ENCODE measurements at regions of chr2 and their contacts with region 1.

Region 1: DNA sequence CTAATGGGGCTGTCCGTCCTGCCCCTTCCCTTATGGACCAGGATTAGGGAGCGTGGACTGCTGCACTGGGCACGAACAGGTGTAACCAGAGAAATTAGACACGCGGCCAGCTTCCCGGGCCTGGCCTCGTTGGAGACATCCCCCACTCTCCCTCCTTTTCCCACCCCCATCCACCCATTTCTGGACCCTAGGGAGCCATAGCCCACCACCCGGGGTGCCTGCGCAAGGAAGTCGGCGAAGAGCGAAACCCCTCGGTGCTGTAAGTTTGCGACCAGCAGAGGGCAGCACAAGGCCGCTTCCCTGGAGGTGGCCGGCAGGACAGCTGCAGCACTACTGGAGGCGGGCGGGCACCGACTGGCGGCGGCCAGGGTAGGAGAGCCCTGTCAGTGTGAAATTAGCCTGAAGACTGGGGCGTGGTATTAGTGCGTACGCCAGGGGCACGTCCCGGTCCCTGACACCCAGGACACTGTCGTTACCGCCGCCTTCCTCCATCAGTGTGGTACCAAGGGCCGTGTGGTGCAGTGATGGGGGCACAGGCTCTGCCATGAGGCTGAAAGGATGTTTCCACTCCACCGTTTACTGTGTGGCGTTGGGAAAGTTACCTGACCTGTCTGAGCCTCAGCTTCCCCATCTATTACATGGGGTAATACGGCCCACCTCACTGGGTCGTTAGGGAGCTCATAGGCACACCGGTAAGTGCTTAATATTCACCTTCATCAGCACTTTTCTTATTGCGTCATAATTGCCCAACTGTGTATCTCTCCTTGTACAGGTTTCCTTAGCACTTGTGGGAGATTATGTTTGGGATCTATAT is 36.0 kb upstream of the CD207 start:
- DNase-seq: peak; percentile 92
- ATAC-seq: peak; percentile 96
- H3K4me3 Mint-ChIP-seq: no peak overlapping the region
- H3K27ac Mint-ChIP-seq: no peak overlapping the region
- H3K4me1 Mint-ChIP-seq: peaks cover 5% of the 10 kb centered on the region
- H3K27me3 Mint-ChIP-seq: peaks cover 41% of the 10 kb centered on the region

Region 2: GRCh38 chr2:70789304-70790135 is 82.1 kb before region 1 on chr2:
- CTCF ChIA-PET with region 1: interaction called, 16 read pairs
- POLR2A ChIA-PET with region 1: no interaction called
- intact Hi-C with region 1: loop called in 1 of 2 experiments (anchors 2 kb)
- DNase-seq: peak; percentile 88
- ATAC-seq: peak; percentile 84
- H3K4me3 Mint-ChIP-seq: peak overlapping the region; percentile 56
- H3K27ac Mint-ChIP-seq: peak overlapping the region; percentile 27
- H3K4me1 Mint-ChIP-seq: peaks cover 11% of the 10 kb centered on the region
- H3K27me3 Mint-ChIP-seq: peaks cover 50% of the 10 kb centered on the region

Region 3: DNA sequence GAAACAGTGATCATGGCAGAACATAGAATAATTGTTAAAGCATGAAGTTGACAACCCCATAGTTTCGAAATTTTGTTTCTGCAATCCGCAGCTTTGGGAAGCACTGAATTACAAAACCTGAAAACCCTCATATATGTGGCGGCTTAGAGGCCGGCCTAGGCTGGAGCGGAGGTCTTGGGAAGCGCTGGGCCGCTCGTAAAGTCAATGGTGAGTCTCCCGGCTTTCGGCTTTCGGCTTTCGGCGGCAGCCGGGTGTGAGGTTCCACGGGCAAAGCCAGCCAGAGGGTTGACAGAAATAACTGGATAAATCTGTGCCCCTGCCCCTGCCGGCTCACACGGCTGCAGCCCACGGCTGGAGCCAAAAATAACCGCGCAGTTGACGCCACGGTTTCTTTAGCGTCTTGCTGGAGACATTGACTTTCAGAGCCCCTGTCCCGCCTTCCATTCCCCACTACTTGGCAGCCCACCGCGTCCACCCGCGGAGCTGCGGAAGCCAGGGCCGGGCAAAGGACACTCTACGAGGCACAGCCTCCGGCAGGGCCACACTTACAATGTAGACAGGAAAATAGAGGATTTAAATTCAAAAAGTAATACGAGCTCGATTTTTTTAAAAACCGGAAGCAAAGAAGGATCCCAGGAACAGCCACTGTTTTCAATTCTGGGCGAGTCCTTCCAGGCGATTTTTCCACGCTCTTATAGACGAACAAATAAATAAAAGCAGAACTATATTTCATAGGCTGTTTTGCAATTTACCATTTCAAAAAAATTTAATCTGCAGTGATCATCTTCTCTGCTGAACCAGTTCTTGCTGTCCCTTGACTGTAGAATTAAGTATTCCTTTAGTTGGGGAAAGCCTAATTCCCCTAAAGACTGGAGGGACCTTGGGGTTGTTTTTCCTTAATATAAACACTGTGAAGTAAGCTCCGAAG is 35.8 kb after region 1 on chr2:
- CTCF ChIA-PET with region 1: interaction called, 16 read pairs
- POLR2A ChIA-PET with region 1: no interaction called
- intact Hi-C with region 1: no loop called
- DNase-seq: no peak
- ATAC-seq: no peak
- H3K4me3 Mint-ChIP-seq: peak overlapping the region; percentile 54
- H3K27ac Mint-ChIP-seq: no peak overlapping the region
- H3K4me1 Mint-ChIP-seq: peaks cover 9% of the 10 kb centered on the region
- H3K27me3 Mint-ChIP-seq: peaks cover 69% of the 10 kb centered on the region

Region 4: GRCh38 chr2:70926042-70926441 is 54.4 kb after region 1 on chr2:
- CTCF ChIA-PET with region 1: interaction called, 54 read pairs
- POLR2A ChIA-PET with region 1: no interaction called
- intact Hi-C with region 1: no loop called
- DNase-seq: no peak
- ATAC-seq: no peak
- H3K4me3 Mint-ChIP-seq: no peak overlapping the region
- H3K27ac Mint-ChIP-seq: no peak overlapping the region
- H3K4me1 Mint-ChIP-seq: no peaks in the 10 kb centered on the region
- H3K27me3 Mint-ChIP-seq: no peaks in the 10 kb centered on the region

Region 5: GRCh38 chr2:71637168-71637567 is 765.6 kb after region 1 on chr2:
- CTCF ChIA-PET with region 1: no interaction called
- POLR2A ChIA-PET with region 1: no interaction called
- intact Hi-C with region 1: no loop called
- DNase-seq: no peak
- ATAC-seq: no peak
- H3K4me3 Mint-ChIP-seq: no peak overlapping the region
- H3K27ac Mint-ChIP-seq: no peak overlapping the region
- H3K4me1 Mint-ChIP-seq: no peaks in the 10 kb centered on the region
- H3K27me3 Mint-ChIP-seq: peaks cover 8% of the 10 kb centered on the region